Pancreas (tissue), 10 donors: ENCODE measurements at regions of chrX and their contacts with region 1.

Region 1: DNA sequence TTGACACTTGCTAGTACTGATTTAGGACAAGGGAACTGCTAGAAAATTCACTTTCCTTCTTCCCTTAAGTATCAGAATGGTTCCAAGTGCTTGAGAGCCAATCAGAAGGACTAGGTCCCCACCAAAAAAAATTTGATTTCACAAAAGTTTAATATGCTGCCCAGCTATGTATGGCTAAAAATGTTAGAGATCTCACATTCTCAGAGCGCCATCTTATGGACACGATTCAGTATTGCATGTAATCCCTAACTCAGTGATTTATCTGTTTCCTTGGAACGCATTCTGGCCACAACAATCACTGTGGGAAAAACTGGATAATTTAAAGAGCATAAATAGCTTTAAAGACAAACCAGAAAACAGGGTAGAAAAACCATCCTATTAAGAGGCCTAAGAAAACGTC is 255.1 kb upstream of the GPC4 start:
- DNase-seq: no peak
- ATAC-seq: peak in 3 of 4 donors; percentile 64 to 82 (median 81)
- H3K4me3 ChIP-seq: no peak overlapping the region
- H3K27ac ChIP-seq: no peak overlapping the region
- H3K4me1 ChIP-seq: peaks cover 4 to 12% (median 6%) of the 10 kb centered on the region in 3 donors
- H3K27me3 ChIP-seq: no peaks in the 10 kb centered on the region
- CTCF ChIP-seq: peak; percentile 52 to 72 (median 64)

Region 2: GRCh38 chrX:133335027-133335426 is 335.4 kb before region 1 on chrX:
- intact Hi-C with region 1: loop called in 1 of 3 experiments (anchors 10 kb)
- DNase-seq: no peak
- ATAC-seq: peak; percentile 53 to 70 (median 68)
- H3K4me3 ChIP-seq: no peak overlapping the region
- H3K27ac ChIP-seq: no peak overlapping the region
- H3K4me1 ChIP-seq: peaks cover 3 to 7% (median 7%) of the 10 kb centered on the region in 3 donors
- H3K27me3 ChIP-seq: no peaks in the 10 kb centered on the region
- CTCF ChIP-seq: peak in 3 of 4 donors; percentile 24 to 32 (median 28)